ENCODE measurements at regions of chr13 and their contacts with region 1.

Region 1: GRCh38 chr13:32538621-32539246 is at the start of gene N4BP2L2:
- DNase-seq: peak; percentile 99
- ATAC-seq: peak; percentile 98
- H3K4me3 ChIP-seq: peak within 1 kb of the TSS; percentile 75
- H3K27ac ChIP-seq: peak within 1 kb of the TSS; percentile 80
- H3K4me1 ChIP-seq: no peaks in the 10 kb centered on the region; the same call in 1 of the 2 replicates
- H3K27me3 ChIP-seq: no peaks in the 10 kb centered on the region
- CTCF ChIP-seq: peak; percentile 50
- POLR2A ChIP-seq: peak; percentile 50
- RAD21 ChIP-seq: peak; percentile 38
- total RNA-seq, gene N4BP2L2: 34.6 and 66.7 TPM in 2 replicates

Region 2: DNA sequence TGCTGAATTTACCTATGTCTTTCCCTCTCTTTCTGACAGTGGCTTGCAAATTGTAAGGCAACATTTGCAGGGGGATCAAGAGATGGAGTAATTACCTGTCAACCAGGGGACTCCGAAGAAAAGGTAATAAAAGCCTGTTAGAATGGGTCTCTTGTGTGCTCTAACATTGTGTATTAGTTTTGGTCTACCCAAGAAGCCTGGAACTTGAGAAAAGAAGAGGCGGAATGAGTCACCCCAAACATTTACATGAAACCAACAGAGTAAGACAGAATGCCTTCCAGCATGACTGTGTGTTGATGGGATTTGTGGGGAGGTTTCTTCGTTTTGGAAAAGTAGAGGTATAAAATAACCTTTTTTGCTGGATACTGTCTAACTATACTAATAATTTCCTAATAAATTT is 260.3 kb before region 1 on chr13:
- CTCF ChIA-PET with region 1: no interaction called
- POLR2A ChIA-PET with region 1: no interaction called
- dilution Hi-C with region 1: no loop called
- in situ Hi-C with region 1: no loop called
- intact Hi-C with region 1: no loop called
- DNase-seq: peak; percentile 91
- ATAC-seq: peak; percentile 99
- H3K4me3 ChIP-seq: no peak overlapping the region
- H3K27ac ChIP-seq: no peak overlapping the region
- H3K4me1 ChIP-seq: peaks cover 5% of the 10 kb centered on the region; the same call in 1 of the 2 replicates
- H3K27me3 ChIP-seq: no peaks in the 10 kb centered on the region
- CTCF ChIP-seq: no peak
- POLR2A ChIP-seq: no peak
- RAD21 ChIP-seq: no peak

Region 3: DNA sequence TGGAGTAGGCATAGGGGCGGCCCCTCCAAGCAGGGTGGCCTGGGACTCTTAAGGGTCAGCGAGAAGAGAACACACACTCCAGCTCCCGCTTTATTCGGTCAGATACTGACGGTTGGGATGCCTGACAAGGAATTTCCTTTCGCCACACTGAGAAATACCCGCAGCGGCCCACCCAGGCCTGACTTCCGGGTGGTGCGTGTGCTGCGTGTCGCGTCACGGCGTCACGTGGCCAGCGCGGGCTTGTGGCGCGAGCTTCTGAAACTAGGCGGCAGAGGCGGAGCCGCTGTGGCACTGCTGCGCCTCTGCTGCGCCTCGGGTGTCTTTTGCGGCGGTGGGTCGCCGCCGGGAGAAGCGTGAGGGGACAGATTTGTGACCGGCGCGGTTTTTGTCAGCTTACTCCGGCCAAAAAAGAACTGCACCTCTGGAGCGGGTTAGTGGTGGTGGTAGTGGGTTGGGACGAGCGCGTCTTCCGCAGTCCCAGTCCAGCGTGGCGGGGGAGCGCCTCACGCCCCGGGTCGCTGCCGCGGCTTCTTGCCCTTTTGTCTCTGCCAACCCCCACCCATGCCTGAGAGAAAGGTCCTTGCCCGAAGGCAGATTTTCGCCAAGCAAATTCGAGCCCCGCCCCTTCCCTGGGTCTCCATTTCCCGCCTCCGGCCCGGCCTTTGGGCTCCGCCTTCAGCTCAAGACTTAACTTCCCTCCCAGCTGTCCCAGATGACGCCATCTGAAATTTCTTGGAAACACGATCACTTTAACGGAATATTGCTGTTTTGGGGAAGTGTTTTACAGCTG is 223.3 kb before region 1 on chr13 and contains the starts of genes BRCA2 and ZAR1L:
- CTCF ChIA-PET with region 1: no interaction called
- POLR2A ChIA-PET with region 1: no interaction called
- dilution Hi-C with region 1: no loop called
- in situ Hi-C with region 1: no loop called
- intact Hi-C with region 1: loop called (anchors 5 kb)
- DNase-seq: peak; percentile 87
- ATAC-seq: peak; percentile 95
- H3K4me3 ChIP-seq: peak within 1 kb of the TSS; percentile 64
- H3K27ac ChIP-seq: peak within 1 kb of the TSS; percentile 89
- H3K4me1 ChIP-seq: peaks cover 3% of the 10 kb centered on the region
- H3K27me3 ChIP-seq: no peaks in the 10 kb centered on the region
- CTCF ChIP-seq: no peak
- POLR2A ChIP-seq: peak; percentile 92
- RAD21 ChIP-seq: no peak
- total RNA-seq, gene BRCA2: 9.7 and 11.7 TPM in 2 replicates
- total RNA-seq, gene ZAR1L: not detected in 2 replicates